B cell (primary cell): ENCODE measurements at regions of chr15 and their contacts with region 1.

Region 1: DNA sequence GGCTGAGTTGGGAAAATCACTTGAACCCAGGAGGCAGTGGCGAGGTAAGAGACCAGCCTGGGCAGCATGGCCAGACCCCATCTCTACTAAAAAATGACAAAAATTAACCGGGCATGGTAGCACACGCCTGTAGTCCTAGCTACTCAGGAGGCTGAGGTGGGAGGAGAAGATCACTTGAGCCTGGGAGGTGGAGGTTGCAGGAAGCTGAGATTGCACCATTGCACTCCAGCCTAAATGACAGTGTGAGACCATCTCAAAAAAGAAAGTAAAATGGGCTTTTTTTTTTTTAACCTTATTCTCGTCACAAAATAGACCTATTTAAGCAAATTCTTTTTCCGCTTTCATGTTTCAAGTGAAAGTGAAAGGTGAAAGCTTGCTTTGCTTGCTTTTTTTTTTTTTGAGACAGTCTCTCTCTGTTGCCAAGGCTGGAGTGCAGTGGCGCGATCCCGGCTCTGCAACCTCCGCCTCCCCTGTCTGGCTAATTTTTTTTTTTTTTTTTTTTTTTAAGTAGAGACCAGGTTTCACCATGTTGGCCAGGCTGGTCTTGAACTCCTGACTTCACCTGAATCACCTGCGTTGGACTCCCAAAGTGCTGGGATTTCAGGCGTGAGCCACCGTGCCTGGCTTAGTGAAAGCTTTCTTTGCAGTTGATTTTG is 3.6 kb downstream of the PDIA3 start:
- DNase-seq: peak; percentile 86
- ATAC-seq: peak; percentile 40
- H3K4me3 ChIP-seq: peak overlapping the region in 4 of 5 experiments; percentile 16 to 57 (median 39)
- H3K4me3 Mint-ChIP-seq: peak overlapping the region; percentile 80
- H3K27ac ChIP-seq: peak overlapping the region; percentile 58 to 76
- H3K27ac Mint-ChIP-seq: peak overlapping the region; percentile 90
- H3K4me1 ChIP-seq: peaks cover 50 to 58% of the 10 kb centered on the region in 2 donors
- H3K4me1 Mint-ChIP-seq: peaks cover 56% of the 10 kb centered on the region
- H3K27me3 ChIP-seq: no peaks in the 10 kb centered on the region
- H3K27me3 Mint-ChIP-seq: no peaks in the 10 kb centered on the region
- CTCF ChIP-seq: no peak

Region 2: GRCh38 chr15:42920519-42921227 is 829.1 kb before region 1 on chr15 and contains the start of gene TTBK2:
- CTCF ChIA-PET with region 1: no interaction called
- POLR2A ChIA-PET with region 1: no interaction called
- intact Hi-C with region 1: loop called (anchors 5 kb)
- DNase-seq: peak; percentile 99
- ATAC-seq: peak; percentile 95
- H3K4me3 ChIP-seq: peak within 1 kb of the TSS; percentile 67 to 94 (median 73)
- H3K4me3 Mint-ChIP-seq: peak within 1 kb of the TSS; percentile 90
- H3K27ac ChIP-seq: peak within 1 kb of the TSS; percentile 41 to 46
- H3K27ac Mint-ChIP-seq: peak within 1 kb of the TSS; percentile 92
- H3K4me1 ChIP-seq: peaks cover 12 to 23% of the 10 kb centered on the region in 2 donors
- H3K4me1 Mint-ChIP-seq: peaks cover 34% of the 10 kb centered on the region
- H3K27me3 ChIP-seq: no peaks in the 10 kb centered on the region
- H3K27me3 Mint-ChIP-seq: no peaks in the 10 kb centered on the region
- CTCF ChIP-seq: peak; percentile 16
- total RNA-seq, gene TTBK2: 38.7 and 39.6 TPM in 2 replicates

Region 3: GRCh38 chr15:43769584-43770228 is 19.9 kb after region 1 on chr15:
- CTCF ChIA-PET with region 1: interaction called, 24 read pairs
- POLR2A ChIA-PET with region 1: interaction called, 4 read pairs
- intact Hi-C with region 1: no loop called
- DNase-seq: peak; percentile 74
- ATAC-seq: peak; percentile 78
- H3K4me3 ChIP-seq: no peak overlapping the region
- H3K4me3 Mint-ChIP-seq: no peak overlapping the region
- H3K27ac ChIP-seq: no peak overlapping the region
- H3K27ac Mint-ChIP-seq: no peak overlapping the region
- H3K4me1 ChIP-seq: no peaks in the 10 kb centered on the region
- H3K4me1 Mint-ChIP-seq: peaks cover 19% of the 10 kb centered on the region
- H3K27me3 ChIP-seq: no peaks in the 10 kb centered on the region
- H3K27me3 Mint-ChIP-seq: no peaks in the 10 kb centered on the region
- CTCF ChIP-seq: peak; percentile 90

Region 4: DNA sequence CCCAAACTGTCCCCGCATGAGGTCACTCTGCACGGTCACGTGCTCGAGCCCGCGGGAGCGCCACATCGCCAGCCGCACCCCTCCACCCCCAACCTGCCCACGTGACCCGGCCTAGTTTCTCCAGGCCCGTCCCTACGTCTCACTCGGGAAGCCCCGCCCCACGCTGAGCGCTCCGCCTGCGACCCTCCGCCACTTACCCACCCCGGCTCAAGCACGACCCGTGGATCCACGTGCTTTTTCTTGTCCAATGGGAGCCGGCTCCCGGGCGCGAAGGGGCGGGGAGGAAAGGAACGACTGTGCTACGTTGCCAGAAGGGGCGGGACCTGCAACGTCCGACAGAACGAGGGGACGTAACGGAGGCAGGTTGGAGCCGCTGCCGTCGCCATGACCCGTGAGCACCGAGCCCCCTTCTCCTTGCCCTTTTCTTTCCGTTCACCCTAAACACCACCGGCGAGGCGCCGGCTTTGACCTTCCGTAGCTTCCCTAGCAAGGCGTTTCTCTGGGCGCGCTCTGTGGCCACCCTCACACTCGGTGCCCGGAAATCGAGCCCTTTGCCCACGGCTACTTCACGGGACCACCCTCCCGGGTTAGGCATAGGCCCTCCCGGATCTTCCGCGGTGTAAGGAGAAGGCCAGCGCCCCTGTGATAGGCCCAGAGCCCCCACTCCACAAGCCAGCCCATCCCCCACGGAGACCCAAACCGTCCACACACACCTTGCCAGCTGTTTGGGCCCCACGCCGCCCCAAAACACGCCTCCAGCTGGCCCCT is 42.4 kb after region 1 on chr15 and contains the start of gene SERF2:
- CTCF ChIA-PET with region 1: no interaction called
- POLR2A ChIA-PET with region 1: interaction called, 7 read pairs
- intact Hi-C with region 1: loop called (anchors 1 kb)
- DNase-seq: peak; percentile 100
- ATAC-seq: peak; percentile 86
- H3K4me3 ChIP-seq: peak within 1 kb of the TSS; percentile 50 to 100 (median 94)
- H3K4me3 Mint-ChIP-seq: peak within 1 kb of the TSS; percentile 93
- H3K27ac ChIP-seq: peak within 1 kb of the TSS; percentile 96
- H3K27ac Mint-ChIP-seq: peak within 1 kb of the TSS; percentile 93
- H3K4me1 ChIP-seq: peaks cover 37 to 73% of the 10 kb centered on the region in 2 donors
- H3K4me1 Mint-ChIP-seq: peaks cover 66% of the 10 kb centered on the region
- H3K27me3 ChIP-seq: no peaks in the 10 kb centered on the region
- H3K27me3 Mint-ChIP-seq: no peaks in the 10 kb centered on the region
- CTCF ChIP-seq: no peak
- total RNA-seq, gene SERF2: 436 and 455 TPM in 2 replicates

Region 5: GRCh38 chr15:43824302-43825246 is 74.8 kb after region 1 on chr15 and contains the start of gene MFAP1:
- CTCF ChIA-PET with region 1: interaction called, 4 read pairs
- POLR2A ChIA-PET with region 1: interaction called, 4 read pairs
- intact Hi-C with region 1: loop called (anchors 2 kb)
- DNase-seq: peak; percentile 97
- ATAC-seq: peak; percentile 84
- H3K4me3 ChIP-seq: peak within 1 kb of the TSS; percentile 68 to 100 (median 98)
- H3K4me3 Mint-ChIP-seq: peak within 1 kb of the TSS; percentile 99
- H3K27ac ChIP-seq: peak within 1 kb of the TSS; percentile 94 to 95
- H3K27ac Mint-ChIP-seq: peak within 1 kb of the TSS; percentile 98
- H3K4me1 ChIP-seq: peaks cover 25 to 43% of the 10 kb centered on the region in 2 donors
- H3K4me1 Mint-ChIP-seq: peaks cover 57% of the 10 kb centered on the region
- H3K27me3 ChIP-seq: no peaks in the 10 kb centered on the region
- H3K27me3 Mint-ChIP-seq: no peaks in the 10 kb centered on the region
- CTCF ChIP-seq: no peak
- total RNA-seq, gene MFAP1: 22.0 and 22.1 TPM in 2 replicates